Ovary (tissue), 10 donors: ENCODE measurements at regions of chr9 and their contacts with region 1.

Region 1: DNA sequence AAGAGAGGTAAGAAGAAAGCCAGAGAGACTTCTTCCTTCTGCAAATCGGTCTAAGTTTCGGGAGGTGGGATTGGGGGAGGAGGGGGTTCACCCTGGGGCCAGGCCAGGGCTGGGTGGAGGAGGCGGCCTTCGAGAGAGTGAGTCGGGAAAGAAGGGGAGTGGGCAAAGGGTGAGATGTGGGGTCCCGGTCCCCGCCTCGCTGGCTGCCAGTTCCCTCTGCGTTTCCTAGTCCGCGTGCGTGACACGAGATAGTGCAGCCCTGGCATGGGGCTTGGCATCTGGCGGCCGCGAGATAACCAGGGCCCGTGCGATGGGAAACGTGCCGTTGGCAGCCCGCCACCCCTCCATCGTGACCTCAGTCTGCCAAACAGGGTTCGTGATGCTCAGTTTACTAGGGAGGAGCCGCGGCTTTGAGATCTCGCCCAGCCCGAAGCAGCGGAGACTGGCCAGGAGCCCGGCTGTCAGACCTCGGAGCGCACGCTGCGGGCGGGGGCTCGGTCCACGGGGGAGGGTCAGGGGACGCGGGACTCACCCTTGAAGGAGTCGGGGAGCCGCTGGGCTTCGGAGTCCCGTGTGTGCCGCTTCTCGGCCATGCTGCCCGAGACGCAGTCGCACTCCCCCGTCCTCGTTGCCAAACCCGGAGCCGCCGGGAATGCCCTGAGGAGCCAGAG is at the start of gene STOM:
- DNase-seq: peak; percentile 85 to 95 (median 91)
- H3K4me3 ChIP-seq: peak within 1 kb of the TSS; percentile 54
- H3K27ac ChIP-seq: peak within 1 kb of the TSS; percentile 91 to 94
- H3K4me1 ChIP-seq: peaks cover 18% of the 10 kb centered on the region
- H3K27me3 ChIP-seq: no peaks in the 10 kb centered on the region
- CTCF ChIP-seq: no peak
- EP300 ChIP-seq: no peak
- POLR2A ChIP-seq: peak; percentile 99
- total RNA-seq, gene STOM: 73.1 to 205 (median 164) TPM

Region 2: GRCh38 chr9:121160025-121160424 is 209.7 kb before region 1 on chr9:
- intact Hi-C with region 1: no loop called
- DNase-seq: no peak
- H3K4me3 ChIP-seq: no peak overlapping the region
- H3K27ac ChIP-seq: no peak overlapping the region
- H3K4me1 ChIP-seq: no peaks in the 10 kb centered on the region
- H3K27me3 ChIP-seq: no peaks in the 10 kb centered on the region
- CTCF ChIP-seq: no peak
- EP300 ChIP-seq: no peak
- POLR2A ChIP-seq: no peak

Region 3: GRCh38 chr9:121267689-121268597 is 101.8 kb before region 1 on chr9 and contains the start of gene GSN:
- intact Hi-C with region 1: loop called in 1 of 4 experiments (anchors 5 kb)
- DNase-seq: peak; percentile 85 to 92 (median 89)
- H3K4me3 ChIP-seq: peak within 1 kb of the TSS; percentile 74
- H3K27ac ChIP-seq: peak within 1 kb of the TSS; percentile 57 to 59
- H3K4me1 ChIP-seq: peaks cover 28% of the 10 kb centered on the region
- H3K27me3 ChIP-seq: no peaks in the 10 kb centered on the region
- CTCF ChIP-seq: peak in 1 of 3 donors; percentile 16
- EP300 ChIP-seq: no peak
- POLR2A ChIP-seq: peak; percentile 43
- total RNA-seq, gene GSN: 188 to 706 (median 295) TPM

Region 4: GRCh38 chr9:121278535-121279261 is 91.0 kb before region 1 on chr9:
- intact Hi-C with region 1: loop called in 2 of 4 experiments (anchors 5 kb)
- DNase-seq: peak in 4 of 5 donors; percentile 72 to 79 (median 73)
- H3K4me3 ChIP-seq: no peak overlapping the region
- H3K27ac ChIP-seq: peak overlapping the region; percentile 60 to 81
- H3K4me1 ChIP-seq: peaks cover 39% of the 10 kb centered on the region
- H3K27me3 ChIP-seq: no peaks in the 10 kb centered on the region
- CTCF ChIP-seq: peak; percentile 81 to 94 (median 89)
- EP300 ChIP-seq: no peak
- POLR2A ChIP-seq: no peak

Region 5: DNA sequence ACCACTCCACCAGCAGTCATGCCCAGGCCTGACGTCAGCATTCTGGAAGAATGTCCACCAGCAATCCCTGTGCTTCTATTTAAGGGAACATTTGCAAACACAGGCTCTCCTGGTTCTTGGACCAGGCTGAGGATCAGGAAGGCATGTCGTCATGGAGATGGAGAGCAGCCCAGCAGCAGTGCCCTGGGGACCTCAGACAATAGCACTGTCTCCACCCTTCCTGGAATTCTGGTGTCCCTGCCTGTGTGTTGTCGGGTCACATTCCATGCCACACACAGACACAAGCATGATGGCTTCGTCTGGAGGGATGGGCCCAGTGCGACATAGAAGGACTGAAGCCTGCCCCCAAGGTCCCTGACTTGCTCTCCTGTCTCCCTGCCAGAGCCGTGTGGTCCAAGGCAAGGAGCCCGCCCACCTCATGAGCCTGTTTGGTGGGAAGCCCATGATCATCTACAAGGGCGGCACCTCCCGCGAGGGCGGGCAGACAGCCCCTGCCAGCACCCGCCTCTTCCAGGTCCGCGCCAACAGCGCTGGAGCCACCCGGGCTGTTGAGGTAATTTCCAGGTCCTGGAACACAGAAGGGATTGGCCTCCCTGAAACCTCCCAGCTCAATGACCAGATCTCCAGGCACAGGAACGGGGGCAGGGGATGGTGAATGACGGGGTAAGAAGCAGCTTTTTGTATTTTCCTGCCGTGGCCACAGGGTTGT is 43.4 kb before region 1 on chr9:
- intact Hi-C with region 1: loop called in 3 of 4 experiments (anchors 2 to 10 kb)
- DNase-seq: peak; percentile 32 to 77 (median 56)
- H3K4me3 ChIP-seq: no peak overlapping the region
- H3K27ac ChIP-seq: peak overlapping the region; percentile 41 to 74
- H3K4me1 ChIP-seq: peaks cover 5% of the 10 kb centered on the region
- H3K27me3 ChIP-seq: no peaks in the 10 kb centered on the region
- CTCF ChIP-seq: no peak
- EP300 ChIP-seq: peak; percentile 85
- POLR2A ChIP-seq: no peak